ENCODE measurements at regions of chr2 and their contacts with region 1.

Region 1: DNA sequence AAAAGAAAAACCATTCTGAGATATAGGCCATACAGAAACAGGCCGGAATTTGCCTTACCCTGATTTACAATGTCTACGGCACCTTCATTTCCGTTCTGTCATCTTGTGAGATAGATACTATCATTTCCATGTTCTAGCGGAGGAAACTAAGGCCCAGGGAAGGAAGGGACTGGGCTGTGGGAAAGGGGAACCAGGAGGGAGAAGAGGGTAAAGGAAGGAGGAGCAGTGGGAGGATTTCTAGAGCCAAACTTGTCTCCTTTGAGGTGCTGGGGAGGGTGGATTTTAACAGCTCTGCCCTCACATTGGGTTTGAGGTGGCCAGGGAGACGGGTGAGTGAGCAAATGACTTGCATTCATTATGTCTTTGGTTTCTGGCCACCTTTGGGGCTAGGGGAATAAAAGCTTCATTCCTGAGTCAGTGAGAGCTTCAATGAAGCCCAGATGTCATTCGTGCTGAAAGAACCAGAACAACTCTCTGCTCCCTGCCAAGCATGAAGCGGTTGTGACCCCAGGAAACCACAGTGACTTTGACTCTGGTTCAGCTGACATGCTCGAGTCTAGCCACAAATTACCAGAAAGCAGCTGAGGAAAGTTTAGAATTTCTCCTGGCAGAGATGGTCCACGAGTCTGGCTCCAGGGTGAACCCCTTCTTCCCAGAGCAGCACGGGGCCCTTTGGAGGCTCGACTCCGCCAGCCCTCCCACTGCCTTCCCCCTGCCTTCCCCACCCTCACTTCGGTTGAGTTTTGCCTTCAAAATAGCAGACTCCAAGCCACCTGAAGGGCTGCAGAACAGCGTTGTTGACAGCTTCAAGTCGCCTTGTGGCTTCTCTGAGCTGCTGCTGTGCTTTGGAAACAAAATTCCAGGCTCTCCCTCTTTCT is 3.8 kb downstream of the ACTG2 start:
- DNase-seq: peak in 8 of 9 donors; percentile 22 to 52 (median 37)
- ATAC-seq: peak; percentile 81
- H3K4me3 ChIP-seq: no peak overlapping the region
- H3K4me3 Mint-ChIP-seq: peak overlapping the region; percentile 57 to 90 (median 74)
- H3K27ac ChIP-seq: peak overlapping the region; percentile 65
- H3K27ac Mint-ChIP-seq: peak overlapping the region; percentile 74 to 96 (median 91)
- H3K4me1 ChIP-seq: peaks cover 0 to 13% of the 10 kb centered on the region in 2 donors
- H3K4me1 Mint-ChIP-seq: peaks cover 14 to 50% (median 37%) of the 10 kb centered on the region in 7 donors
- H3K27me3 ChIP-seq: no peaks in the 10 kb centered on the region
- H3K27me3 Mint-ChIP-seq: no peaks in the 10 kb centered on the region

Region 2: GRCh38 chr2:73859721-73860586 is 36.6 kb before region 1 on chr2:
- CTCF ChIA-PET with region 1: no interaction called
- POLR2A ChIA-PET with region 1: no interaction called
- intact Hi-C with region 1: loop called in 1 of 2 experiments (anchors 5 kb)
- DNase-seq: peak in 1 of 9 donors; percentile 34
- ATAC-seq: no peak
- H3K4me3 ChIP-seq: no peak overlapping the region
- H3K4me3 Mint-ChIP-seq: no peak overlapping the region
- H3K27ac ChIP-seq: no peak overlapping the region
- H3K27ac Mint-ChIP-seq: no peak overlapping the region
- H3K4me1 ChIP-seq: no peaks in the 10 kb centered on the region
- H3K4me1 Mint-ChIP-seq: peaks cover 0 to 8% (median 0%) of the 10 kb centered on the region in 7 donors
- H3K27me3 ChIP-seq: no peaks in the 10 kb centered on the region
- H3K27me3 Mint-ChIP-seq: no peaks in the 10 kb centered on the region

Measured in naive thymus-derived CD4-positive, alpha-beta T cell (primary cell).